Right ventricle myocardium inferior (tissue), 1 donor: ENCODE measurements at regions of chr18 and their contacts with region 1.

Region 1: DNA sequence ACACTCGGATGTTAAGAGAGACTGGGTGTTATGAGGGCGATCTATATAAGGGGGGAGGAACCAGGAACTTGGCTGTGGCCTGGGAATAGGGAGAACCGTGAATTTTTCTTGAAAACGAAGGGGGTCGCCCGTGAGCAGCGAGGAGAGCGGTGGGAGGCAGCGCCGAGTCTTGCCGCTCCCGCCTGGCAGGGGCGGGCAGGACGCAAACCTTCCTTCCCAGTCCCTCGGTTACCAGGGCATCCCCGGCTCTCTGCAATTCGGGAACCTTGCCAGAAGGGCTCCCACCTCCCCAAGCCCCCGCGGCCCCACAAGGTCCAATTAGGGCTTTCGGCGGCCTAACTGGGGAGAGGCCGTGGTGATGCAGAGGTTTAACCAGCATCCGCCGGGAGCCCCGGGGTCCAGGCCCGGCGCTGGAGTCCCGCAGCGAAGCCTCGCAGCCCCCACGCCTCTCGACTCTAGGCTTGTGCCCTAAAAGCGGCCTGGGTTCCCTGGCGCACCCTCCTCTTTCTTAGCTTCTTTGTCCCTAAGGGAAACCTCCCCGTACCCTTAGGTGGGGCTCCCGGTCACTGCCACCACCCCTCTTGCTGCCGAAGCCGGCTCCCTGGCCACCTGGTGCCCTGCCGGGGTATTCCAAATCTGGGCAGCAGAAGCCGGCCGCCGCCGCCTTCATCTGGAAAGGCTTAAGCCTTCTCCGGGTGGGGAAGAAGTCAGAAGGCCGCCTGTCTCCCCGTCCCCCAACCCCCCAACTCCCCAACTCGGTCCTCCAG is 680 bp upstream of the FHOD3 start:
- DNase-seq: peak; percentile 77
- ATAC-seq: peak; percentile 67

Region 2: DNA sequence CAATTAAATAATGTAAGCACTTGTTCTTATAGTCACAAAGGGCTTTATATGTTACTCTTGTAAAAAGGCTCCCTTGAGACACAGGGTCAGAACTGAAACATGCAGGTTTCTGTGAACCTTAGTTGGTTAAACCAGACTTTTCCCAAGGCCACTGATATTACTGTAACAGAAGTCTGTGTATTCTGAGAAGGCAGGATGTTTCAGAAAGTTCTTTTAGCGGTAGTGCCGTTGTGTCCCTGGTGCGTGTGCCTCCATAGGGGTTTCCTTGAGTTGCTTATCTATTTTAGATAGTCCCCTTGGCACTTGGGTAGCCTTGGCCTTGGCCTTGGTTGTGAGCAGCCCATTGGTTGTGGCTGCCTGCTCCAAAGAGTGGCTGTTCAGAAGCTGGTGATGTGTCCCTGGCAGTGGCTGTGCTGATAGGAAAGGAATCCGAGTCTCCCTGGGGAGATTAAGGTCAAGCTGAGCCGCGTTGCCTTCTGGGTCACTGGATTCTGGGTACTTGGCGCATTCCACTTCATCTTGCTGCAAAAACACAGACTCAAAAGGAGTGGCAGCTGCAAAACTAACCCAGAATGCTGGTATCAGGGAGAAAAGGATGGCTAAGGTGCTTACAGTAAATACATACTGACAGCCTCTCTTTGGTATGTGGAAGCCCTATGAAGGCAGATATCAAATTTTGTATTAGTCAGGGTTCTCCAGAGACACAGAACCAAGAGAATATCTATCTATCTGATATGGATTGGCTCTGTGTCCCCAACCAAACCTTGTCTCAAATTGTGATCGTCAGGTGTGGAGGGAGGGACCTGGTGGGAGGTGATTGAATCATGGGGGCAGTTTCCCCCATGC is 70.4 kb after region 1 on chr18:
- intact Hi-C with region 1: loop called (anchors 5 kb)
- DNase-seq: peak; percentile 83
- ATAC-seq: peak; percentile 98

Region 3: GRCh38 chr18:36558234-36558633 is 261.4 kb after region 1 on chr18:
- intact Hi-C with region 1: no loop called
- DNase-seq: no peak
- ATAC-seq: no peak

Region 4: DNA sequence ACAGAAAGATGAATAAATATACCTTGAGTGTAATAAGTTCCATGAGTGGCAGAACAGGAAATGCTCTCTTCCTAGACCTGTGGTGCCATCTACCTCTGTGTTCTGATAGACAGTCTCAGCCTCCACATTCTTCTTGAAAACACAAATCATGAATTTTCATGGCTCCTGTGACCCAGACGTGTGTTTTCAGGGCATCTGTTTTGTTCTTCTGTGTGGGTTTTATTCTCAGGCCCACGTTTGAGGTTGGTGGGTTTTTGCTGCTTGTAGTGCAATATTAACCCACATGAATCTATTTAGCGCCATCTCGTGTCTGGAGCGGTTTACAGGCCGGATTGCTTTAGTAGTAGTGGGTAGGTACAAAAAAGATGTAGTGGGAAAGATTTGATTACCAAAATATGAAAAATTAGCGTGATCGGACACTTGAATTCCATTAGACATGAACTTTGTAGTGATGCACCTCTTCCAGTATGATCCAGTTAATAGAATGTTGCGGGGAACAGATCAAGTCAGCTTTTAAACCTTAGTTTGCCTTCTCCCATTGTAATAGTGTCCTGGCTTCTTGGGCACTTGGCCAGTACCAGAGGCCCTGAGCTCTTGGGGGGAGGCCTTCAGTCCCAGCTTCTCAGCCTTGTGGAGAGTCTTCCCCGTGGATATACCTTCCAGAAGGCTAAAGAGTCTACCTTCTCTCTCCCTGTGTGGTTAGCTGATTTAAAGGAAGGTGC is 275.5 kb after region 1 on chr18:
- intact Hi-C with region 1: loop called (anchors 5 kb)
- DNase-seq: no peak
- ATAC-seq: peak; percentile 58

Region 5: DNA sequence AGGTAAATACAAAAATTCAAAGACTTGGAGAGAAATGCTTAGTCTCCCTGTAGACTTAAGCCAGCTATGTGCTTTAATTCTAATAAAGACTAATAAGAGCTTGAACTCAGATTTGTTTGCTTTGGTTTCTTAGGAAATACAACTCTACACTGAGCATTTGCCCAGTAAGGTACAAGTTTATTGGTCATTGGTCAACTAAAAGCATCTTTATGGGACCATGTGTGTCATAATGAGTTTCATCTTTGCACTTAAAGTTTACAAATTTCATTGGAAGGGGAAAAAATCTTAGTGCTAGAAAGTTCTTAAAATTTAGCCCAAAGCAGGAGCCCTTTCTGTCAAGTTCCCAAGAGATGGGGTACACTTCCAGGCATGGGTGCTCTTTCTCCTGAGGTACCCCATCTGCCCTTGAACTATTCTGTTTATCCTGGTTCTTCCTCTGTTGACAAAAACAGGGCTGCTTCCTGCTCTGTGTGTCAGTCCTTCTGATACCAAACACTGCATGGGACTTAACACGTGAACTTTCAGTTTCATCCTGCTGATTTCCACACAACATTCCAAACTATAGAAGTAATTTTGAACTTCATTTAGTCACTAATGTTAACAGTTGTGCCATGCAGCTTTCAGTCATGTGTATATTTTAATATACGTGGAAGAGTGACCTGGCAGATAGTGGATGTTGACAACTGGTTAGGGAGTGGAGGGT is 331.8 kb after region 1 on chr18:
- intact Hi-C with region 1: loop called (anchors 5 kb)
- DNase-seq: no peak
- ATAC-seq: peak; percentile 4